BJ (cell line): ENCODE measurements at regions of chr3 and their contacts with region 1.

Region 1: DNA sequence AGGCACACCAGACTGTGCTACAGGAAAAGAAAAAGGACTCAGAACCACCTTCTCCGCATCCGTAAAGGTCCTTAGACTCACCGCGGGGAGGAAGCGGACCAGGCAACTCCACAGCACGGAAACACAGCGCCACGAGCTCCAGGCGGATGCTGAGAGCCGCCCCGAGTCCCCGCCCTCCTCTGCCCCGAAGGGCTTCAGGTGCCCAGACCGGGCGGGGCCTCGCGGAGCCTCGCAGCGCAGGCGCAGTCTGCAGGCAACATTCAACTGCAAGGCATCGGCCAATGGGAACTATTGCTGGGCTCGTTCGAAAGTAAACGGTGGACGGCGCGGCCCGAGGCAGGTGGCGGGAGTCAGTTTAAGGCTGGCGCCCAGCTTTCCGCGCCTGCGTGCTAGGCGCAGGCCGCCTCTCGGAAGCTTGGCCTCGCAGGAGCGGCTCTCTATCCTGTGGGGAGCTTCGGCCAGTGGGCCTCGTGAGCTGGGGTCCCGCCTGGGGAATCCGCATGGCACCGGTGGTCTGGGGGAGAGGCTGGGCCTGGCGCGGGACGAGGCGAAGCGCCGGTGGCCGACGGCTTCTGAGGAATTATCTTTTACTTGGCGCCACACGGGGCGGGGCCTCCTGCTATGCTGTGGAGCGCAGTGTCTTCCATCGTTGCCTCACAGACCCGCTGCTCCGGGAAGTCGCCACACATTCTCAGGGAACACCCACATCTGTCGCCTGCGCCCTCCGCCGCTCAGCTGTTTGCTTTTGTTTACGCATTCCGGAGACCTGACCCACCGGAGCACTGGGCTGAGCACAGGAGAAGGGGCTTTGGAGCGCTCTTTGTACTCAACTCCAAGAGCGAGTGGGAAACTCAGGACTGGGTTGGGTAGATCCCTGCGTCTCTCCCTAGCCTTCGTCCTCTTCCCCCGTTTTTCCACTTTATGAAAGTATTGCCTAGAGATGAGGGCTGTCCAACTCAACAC is at the start of gene TRIM59:
- DNase-seq: peak; percentile 87
- H3K4me3 ChIP-seq: peak within 1 kb of the TSS; percentile 89
- H3K27me3 ChIP-seq: no peaks in the 10 kb centered on the region
- CTCF ChIP-seq: 0 out of 2 replicates have a peak, but pooled peaks have one; percentile 13
- polyA plus RNA-seq, gene TRIM59: 10.3 and 17.2 TPM in 2 replicates

Region 2: GRCh38 chr3:160393346-160394008 is 56.4 kb before region 1 on chr3:
- CTCF ChIA-PET with region 1: no interaction called
- POLR2A ChIA-PET with region 1: no interaction called
- DNase-seq: no peak
- H3K4me3 ChIP-seq: no peak overlapping the region
- H3K27me3 ChIP-seq: no peaks in the 10 kb centered on the region
- CTCF ChIP-seq: no peak

Region 3: GRCh38 chr3:160486459-160486869 is 36.5 kb after region 1 on chr3:
- CTCF ChIA-PET with region 1: interaction called, 12 read pairs
- POLR2A ChIA-PET with region 1: no interaction called
- DNase-seq: no peak
- H3K4me3 ChIP-seq: no peak overlapping the region
- H3K27me3 ChIP-seq: no peaks in the 10 kb centered on the region
- CTCF ChIP-seq: peak; percentile 50

Region 4: DNA sequence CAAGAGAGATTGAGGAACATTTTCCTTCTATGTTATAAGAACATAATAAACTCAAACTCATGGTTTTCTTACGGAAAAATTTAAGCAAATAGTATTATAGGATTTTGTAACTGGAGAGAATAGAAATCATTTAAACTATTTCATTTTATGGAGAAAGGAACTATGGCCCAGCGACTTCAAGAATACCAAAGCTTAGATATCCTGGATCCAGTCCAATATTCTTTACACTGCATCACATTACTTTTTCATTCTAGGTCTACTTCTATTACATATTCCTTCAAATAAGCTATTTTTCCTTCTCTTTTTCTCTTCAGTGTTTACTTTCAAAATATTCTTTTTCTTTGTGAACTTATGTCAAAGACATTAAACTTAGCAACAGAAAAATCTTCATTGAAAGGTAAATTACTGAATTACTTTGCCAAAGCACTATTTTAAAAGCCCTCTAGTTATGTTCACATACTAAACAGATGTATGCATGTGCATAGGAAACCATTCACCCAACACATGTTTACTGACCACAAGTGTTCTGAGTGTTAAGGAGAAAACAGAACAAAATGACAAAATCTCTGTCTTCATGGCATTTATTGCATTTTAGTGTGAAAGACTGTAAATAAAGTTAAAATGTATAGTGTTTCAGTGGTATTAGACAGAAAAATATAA is 95.1 kb after region 1 on chr3:
- CTCF ChIA-PET with region 1: no interaction called
- POLR2A ChIA-PET with region 1: no interaction called
- DNase-seq: no peak
- H3K4me3 ChIP-seq: no peak overlapping the region
- H3K27me3 ChIP-seq: no peaks in the 10 kb centered on the region
- CTCF ChIP-seq: no peak